ENCODE measurements at regions of chrX and their contacts with region 1.

Region 1: GRCh38 chrX:47650164-47651042 is at the start of gene ELK1:
- DNase-seq: peak; percentile 90 to 98
- H3K4me3 ChIP-seq: peak within 1 kb of the TSS; percentile 67 to 71
- H3K27ac ChIP-seq: peak within 1 kb of the TSS; percentile 85 to 87
- H3K4me1 ChIP-seq: peaks cover 0 to 7% of the 10 kb centered on the region in 2 donors
- H3K27me3 ChIP-seq: no peaks in the 10 kb centered on the region
- CTCF ChIP-seq: no peak
- total RNA-seq, gene ELK1: 146 TPM

Region 2: DNA sequence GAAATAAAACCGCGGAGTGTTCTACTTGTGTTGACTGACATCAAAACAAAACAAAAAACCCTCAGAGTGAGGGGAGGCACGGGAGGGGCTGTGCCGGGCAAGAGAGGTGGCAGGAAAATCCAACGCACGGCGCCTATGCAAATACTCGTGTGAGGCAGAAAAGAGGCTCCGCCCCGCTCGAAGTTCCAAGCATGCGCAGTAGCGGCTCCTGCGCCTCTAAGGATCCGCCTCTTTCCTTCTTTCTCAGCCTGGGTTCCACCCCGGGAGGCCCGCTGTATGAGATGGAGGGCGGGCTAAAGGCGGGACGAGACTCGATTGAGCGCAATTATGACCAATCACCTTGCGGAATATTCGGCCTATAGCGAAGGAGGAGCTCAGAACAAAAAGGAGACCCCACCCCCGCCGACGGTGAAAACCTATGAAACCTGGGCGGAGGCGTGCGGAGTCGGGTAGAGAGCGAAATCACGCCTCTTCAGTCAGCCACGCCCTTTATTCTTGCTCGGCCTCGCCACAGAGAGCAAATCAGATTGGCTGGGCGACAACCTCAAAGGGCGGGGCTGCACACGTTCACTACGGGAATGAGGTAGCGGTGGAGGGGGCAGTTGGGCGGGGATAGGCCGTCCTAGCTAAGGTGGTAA is 432.6 kb before region 1 on chrX:
- intact Hi-C with region 1: no loop called
- DNase-seq: peak; percentile 98 to 100
- H3K4me3 ChIP-seq: peak overlapping the region; percentile 87 to 92
- H3K27ac ChIP-seq: peak overlapping the region; percentile 95 to 97
- H3K4me1 ChIP-seq: peaks cover 3 to 14% of the 10 kb centered on the region in 2 donors
- H3K27me3 ChIP-seq: no peaks in the 10 kb centered on the region
- CTCF ChIP-seq: no peak

Region 3: DNA sequence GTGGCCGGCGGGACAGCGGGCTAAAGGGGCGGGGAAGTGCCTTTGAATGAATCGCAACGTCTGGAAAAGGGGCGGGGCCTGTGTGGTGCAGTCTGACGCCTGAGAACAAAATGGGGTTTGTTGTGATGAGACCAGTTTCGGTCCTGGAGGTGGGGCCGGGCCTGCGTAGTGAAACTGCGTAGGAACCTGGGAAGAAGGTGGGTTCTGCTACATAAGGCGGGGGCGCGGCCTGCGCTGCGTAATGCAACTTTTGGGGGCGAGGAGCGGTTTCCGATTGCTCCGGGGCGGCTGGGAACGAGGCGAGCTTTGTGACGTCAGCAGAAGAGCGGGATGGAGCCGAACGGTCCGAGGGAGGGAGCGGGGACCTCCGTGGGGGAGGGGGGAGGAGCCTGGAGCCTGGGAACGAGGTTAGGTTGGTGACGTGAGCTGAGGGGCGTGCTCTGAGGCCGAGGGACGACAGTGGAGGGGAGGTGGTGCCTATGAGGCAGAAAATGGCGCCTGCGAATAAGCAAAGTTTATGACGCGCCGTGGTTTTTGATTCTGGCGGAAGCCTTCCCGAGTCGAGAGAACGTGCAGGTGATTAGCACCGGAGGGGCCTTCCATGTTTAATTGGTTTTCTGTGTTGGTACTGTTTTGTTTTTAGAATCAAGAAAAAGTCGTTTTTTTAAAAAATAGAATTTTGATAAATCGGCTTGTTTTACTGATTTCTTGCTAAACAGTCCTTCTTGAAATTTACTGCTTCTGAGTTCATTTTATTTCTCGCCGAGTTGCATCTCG is 416.9 kb before region 1 on chrX:
- intact Hi-C with region 1: loop called (anchors 5 kb)
- DNase-seq: peak; percentile 96 to 97
- H3K4me3 ChIP-seq: peak overlapping the region; percentile 56 to 88
- H3K27ac ChIP-seq: peak overlapping the region; percentile 89 to 98
- H3K4me1 ChIP-seq: peaks cover 0 to 3% of the 10 kb centered on the region in 2 donors
- H3K27me3 ChIP-seq: no peaks in the 10 kb centered on the region
- CTCF ChIP-seq: no peak

Region 4: DNA sequence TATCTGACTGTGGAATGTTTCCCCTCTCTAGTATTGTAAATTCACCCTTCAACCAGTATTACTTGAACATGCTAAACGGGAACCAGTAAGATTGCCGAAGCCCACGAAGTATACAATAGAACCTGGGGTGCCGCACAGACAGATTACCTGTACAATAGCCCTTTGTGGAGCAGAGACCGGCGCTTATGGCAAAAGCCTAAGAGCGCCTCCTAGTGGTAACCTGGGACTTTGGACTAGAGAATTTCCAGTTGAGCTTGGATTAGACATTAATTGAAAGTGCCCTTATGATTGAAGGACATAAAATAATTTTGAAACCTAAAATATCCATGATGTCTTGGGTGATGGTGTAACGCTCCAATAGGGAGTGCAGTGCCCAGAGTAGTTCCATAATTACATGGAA is 265.9 kb before region 1 on chrX:
- intact Hi-C with region 1: no loop called
- DNase-seq: peak in 1 of 2 donors; percentile 84
- H3K4me3 ChIP-seq: no peak overlapping the region
- H3K27ac ChIP-seq: no peak overlapping the region
- H3K4me1 ChIP-seq: no peaks in the 10 kb centered on the region
- H3K27me3 ChIP-seq: no peaks in the 10 kb centered on the region
- CTCF ChIP-seq: peak; percentile 43 to 73 (median 71)

Region 5: DNA sequence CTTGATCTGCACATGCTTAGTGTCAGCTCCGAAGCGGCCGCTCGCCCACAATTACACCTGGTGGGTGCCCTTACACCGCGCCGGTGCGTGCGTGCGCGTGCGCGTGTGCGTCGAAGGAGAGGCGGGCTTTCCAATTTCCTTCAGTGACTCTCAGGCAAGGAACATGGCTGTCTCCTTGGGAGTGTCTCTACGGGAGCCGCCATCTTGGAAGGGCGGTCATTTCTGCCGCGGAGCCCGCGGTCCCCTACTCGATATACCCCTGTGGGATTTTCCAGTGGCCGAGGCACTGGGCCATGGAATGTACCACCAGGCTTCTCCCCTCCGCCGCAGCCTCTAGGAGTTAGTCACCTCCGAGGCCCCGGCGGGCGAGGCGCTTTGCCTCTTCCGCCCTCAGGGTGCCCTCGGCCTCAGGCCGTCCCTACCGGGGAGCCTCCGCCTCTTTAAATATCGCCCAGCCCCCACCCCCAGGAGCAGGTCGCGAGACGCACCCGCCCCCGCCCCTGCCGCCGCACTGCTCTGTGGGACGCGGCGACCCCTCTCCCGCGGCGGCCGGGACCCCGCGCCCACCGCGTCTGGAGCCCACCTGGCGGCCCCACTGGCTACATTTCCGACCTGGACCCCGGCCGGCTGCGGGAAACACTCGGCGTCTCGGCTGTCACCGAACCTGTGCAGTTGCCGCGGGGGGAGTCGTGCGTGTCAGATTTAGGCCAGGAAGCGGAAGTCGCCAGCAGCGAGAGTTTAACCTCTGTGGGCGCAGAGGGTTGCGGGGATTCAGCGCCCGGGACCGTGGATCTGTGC is 167.7 kb before region 1 on chrX and contains the start of gene ZNF41:
- intact Hi-C with region 1: loop called (anchors 2 kb)
- DNase-seq: peak; percentile 18 to 82
- H3K4me3 ChIP-seq: peak within 1 kb of the TSS; percentile 58 to 77
- H3K27ac ChIP-seq: peak within 1 kb of the TSS; percentile 93 to 94
- H3K4me1 ChIP-seq: no peaks in the 10 kb centered on the region
- H3K27me3 ChIP-seq: no peaks in the 10 kb centered on the region
- CTCF ChIP-seq: no peak
- total RNA-seq, gene ZNF41: 2.7 TPM

Region 6: GRCh38 chrX:47560831-47561652 is 89.4 kb before region 1 on chrX and contains the start of gene ARAF:
- intact Hi-C with region 1: loop called (anchors 2 kb)
- DNase-seq: peak; percentile 95 to 98
- H3K4me3 ChIP-seq: peak within 1 kb of the TSS; percentile 53 to 63
- H3K27ac ChIP-seq: peak within 1 kb of the TSS; percentile 85 to 95
- H3K4me1 ChIP-seq: peaks cover 0 to 6% of the 10 kb centered on the region in 2 donors
- H3K27me3 ChIP-seq: no peaks in the 10 kb centered on the region
- CTCF ChIP-seq: no peak
- total RNA-seq, gene ARAF: 56.1 TPM

Region 7: DNA sequence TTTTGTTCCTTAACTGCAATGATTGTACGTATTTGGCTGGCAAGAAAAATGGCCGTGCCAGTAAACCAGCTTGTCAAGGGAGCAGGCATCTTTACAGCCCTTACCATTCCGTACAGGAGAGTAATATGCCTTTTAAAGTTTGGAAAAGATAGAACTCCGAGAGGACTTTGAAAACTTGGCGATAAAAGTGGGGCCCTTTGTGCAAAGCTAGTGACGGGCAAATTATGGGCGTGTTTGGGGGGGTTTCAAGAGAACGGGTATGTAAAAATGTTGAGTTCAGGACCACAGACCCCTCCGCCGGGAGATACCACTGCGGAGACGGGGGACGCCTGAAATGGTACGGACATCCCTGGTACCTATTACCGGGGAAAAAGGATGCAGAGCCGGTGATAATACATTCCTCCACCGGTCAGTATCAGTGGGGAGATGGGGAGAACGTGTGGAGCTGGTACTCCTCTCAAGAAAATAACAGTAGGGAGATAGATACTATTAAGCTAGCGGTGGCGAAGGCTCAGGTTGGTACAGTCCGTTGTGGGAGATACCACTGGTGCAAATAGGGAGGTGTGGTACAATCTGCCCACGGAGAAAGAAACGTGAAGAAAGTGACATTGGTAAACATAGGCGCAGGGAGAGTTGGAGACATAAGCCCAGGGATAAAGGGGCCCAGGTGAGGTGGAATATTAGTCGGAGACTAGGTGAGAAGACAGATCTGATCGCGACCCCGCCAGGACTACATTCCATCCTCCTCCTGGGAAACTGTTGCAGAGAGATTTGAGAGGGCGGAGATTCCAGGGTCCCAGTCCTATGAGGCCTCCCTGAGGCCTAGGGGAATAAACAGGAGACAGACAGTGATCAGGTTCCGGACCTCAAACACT is 370.9 kb after region 1 on chrX:
- intact Hi-C with region 1: loop called (anchors 10 kb)
- DNase-seq: peak in 1 of 2 donors; percentile 75
- H3K4me3 ChIP-seq: peak overlapping the region; percentile 55 to 61
- H3K27ac ChIP-seq: peak overlapping the region; percentile 82 to 87
- H3K4me1 ChIP-seq: peaks cover 0 to 2% of the 10 kb centered on the region in 2 donors
- H3K27me3 ChIP-seq: no peaks in the 10 kb centered on the region
- CTCF ChIP-seq: no peak

Measured in ascending aorta (tissue), 2 donors.